ENCODE measurements at regions of chr18 and their contacts with region 1.

Region 1: DNA sequence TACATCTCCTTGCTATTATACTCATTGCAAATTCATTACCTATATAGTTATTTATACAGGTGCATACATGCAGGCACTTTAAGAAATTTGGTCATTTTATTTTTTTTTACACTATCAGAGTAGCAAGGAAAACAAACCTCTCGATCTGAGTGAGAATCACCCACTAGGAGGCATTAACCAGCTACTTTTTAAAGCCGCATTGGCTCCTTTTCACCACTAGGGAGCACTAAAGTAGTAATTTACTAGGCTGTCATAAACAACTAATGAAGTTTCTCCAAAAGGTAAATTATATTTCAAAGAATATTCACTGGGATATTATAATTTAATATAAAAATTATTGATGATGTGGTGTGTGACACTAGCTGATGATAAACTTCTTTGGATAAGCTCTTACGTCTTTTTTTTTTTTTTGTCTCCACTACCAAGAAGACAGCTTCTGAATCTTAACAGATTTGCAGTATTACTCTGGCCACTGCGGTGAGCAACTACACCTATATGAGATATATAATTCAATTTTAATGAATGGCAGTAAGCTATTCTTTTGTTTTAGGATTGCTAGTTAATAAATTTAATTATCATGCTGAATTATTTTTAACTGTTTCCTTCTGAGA is 101.9 kb downstream of the NOL4 start:
- DNase-seq: no peak
- H3K4me3 Mint-ChIP-seq: no peak overlapping the region
- H3K27ac Mint-ChIP-seq: no peak overlapping the region
- H3K4me1 Mint-ChIP-seq: no peaks in the 10 kb centered on the region
- H3K27me3 Mint-ChIP-seq: no peaks in the 10 kb centered on the region

Region 2: GRCh38 chr18:34322365-34323289 is 199.8 kb after region 1 on chr18:
- intact Hi-C with region 1: loop called (anchors 5 kb)
- DNase-seq: no peak
- H3K4me3 Mint-ChIP-seq: no peak overlapping the region
- H3K27ac Mint-ChIP-seq: no peak overlapping the region
- H3K4me1 Mint-ChIP-seq: no peaks in the 10 kb centered on the region
- H3K27me3 Mint-ChIP-seq: no peaks in the 10 kb centered on the region

Measured in activated T-helper 1 cell treated with anti-CD3 and anti-CD28 coated beads, Interleukin-12 subunit alpha, Interleukin-12 subunit beta, Interleukin-2, Interleukin-4 antibody, amounts not matched to agents 30 ng/mL and 10 ng/mL and 1 ng/mL, durations not matched to agents 14 hours and 24 hours and 36 hours (primary cell).